Activated CD4-positive, alpha-beta memory T cell treated with anti-CD3 and anti-CD28 coated beads for 36 hours (primary cell): ENCODE measurements at regions of chr3 and their contacts with region 1.

Region 1: DNA sequence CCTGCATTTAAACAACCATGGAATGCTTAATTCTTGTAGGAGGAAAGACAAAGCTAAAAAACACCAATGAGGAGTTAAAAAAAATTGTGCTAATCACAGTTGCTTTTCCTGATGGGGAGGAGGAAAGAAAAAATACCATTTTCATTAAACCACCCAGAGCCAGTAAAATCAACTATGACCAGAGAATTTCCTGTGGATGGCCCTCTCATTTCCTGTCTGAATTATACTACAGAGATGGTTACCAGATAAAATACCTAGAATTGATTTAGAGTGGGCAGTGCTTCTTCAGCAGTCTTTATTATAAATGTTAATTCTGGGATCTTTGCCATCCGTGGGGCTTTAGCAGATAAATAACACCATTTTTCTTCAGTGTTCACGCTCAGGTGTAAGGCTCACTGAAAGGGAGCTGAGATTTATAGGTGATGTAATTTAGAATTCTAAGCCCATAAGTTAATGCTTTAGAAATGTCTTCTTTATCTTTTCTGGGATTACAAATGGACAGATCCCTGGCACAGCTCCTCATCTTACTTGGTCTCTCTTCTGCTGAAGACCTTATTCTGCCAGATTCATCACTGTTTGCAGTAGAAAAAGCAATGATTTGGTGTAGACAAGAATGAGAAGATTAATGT is 37.9 kb downstream of the RETNLB start:
- DNase-seq: no peak
- H3K4me3 Mint-ChIP-seq: no peak overlapping the region
- H3K27ac Mint-ChIP-seq: no peak overlapping the region
- H3K4me1 Mint-ChIP-seq: no peaks in the 10 kb centered on the region
- H3K27me3 Mint-ChIP-seq: no peaks in the 10 kb centered on the region

Region 2: GRCh38 chr3:108775649-108776048 is 56.4 kb after region 1 on chr3:
- CTCF ChIA-PET with region 1: no interaction called
- POLR2A ChIA-PET with region 1: no interaction called
- intact Hi-C with region 1: loop called (anchors 5 kb)
- DNase-seq: no peak
- H3K4me3 Mint-ChIP-seq: no peak overlapping the region
- H3K27ac Mint-ChIP-seq: no peak overlapping the region
- H3K4me1 Mint-ChIP-seq: peaks cover 34% of the 10 kb centered on the region
- H3K27me3 Mint-ChIP-seq: no peaks in the 10 kb centered on the region